Activated naive CD4-positive, alpha-beta T cell treated with anti-CD3 and anti-CD28 coated beads for 36 hours (primary cell): ENCODE measurements at regions of chr21 and their contacts with region 1.

Region 1: GRCh38 chr21:15729674-15730483 is at the start of gene USP25:
- DNase-seq: peak; percentile 77
- H3K4me3 Mint-ChIP-seq: peak within 1 kb of the TSS; percentile 91
- H3K27ac Mint-ChIP-seq: peak within 1 kb of the TSS; percentile 83
- H3K4me1 Mint-ChIP-seq: peaks cover 24% of the 10 kb centered on the region
- H3K27me3 Mint-ChIP-seq: peaks cover 2% of the 10 kb centered on the region
- total RNA-seq, gene USP25: 24.7 to 27.8 TPM

Region 2: GRCh38 chr21:14545906-14546480 is 1183.9 kb before region 1 on chr21 and contains the start of gene SAMSN1:
- CTCF ChIA-PET with region 1: no interaction called
- intact Hi-C with region 1: loop called (anchors 2 kb)
- DNase-seq: peak; percentile 83
- H3K4me3 Mint-ChIP-seq: peak within 1 kb of the TSS; percentile 88
- H3K27ac Mint-ChIP-seq: peak within 1 kb of the TSS; percentile 92
- H3K4me1 Mint-ChIP-seq: peaks cover 53% of the 10 kb centered on the region
- H3K27me3 Mint-ChIP-seq: no peaks in the 10 kb centered on the region
- total RNA-seq, gene SAMSN1: 41.1 to 43.0 TPM

Region 3: DNA sequence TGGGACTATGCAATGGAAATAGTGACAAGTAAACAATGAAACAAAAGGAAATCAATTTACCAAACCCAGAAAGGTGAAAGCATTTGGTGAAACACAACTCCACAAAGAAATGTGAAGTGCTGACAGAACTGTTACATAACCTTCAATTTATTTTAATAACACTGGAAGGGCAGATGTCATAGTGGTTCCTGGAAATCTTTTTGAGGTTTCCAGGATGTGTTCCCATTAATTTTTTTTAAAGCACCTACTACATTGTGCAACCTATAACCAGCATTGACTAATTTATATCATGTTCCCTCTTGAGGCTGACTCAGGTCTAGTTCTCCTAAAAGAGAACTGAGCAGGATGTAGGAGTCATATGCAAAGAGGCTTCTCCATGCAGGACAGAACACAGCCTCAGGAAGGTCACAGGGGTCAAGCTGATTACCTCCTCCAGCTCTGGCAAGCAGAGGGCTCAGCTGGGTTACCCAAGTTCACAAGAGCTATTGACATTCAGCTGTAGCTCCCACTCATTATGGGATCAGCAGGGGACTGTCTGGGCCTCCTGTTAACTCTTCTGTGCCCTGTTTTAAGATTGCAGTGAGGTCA is 508.0 kb before region 1 on chr21:
- CTCF ChIA-PET with region 1: no interaction called
- intact Hi-C with region 1: loop called (anchors 1 kb)
- DNase-seq: peak; percentile 48
- H3K4me3 Mint-ChIP-seq: no peak overlapping the region
- H3K27ac Mint-ChIP-seq: peak overlapping the region; percentile 30
- H3K4me1 Mint-ChIP-seq: peaks cover 29% of the 10 kb centered on the region
- H3K27me3 Mint-ChIP-seq: peaks cover 4% of the 10 kb centered on the region

Region 4: DNA sequence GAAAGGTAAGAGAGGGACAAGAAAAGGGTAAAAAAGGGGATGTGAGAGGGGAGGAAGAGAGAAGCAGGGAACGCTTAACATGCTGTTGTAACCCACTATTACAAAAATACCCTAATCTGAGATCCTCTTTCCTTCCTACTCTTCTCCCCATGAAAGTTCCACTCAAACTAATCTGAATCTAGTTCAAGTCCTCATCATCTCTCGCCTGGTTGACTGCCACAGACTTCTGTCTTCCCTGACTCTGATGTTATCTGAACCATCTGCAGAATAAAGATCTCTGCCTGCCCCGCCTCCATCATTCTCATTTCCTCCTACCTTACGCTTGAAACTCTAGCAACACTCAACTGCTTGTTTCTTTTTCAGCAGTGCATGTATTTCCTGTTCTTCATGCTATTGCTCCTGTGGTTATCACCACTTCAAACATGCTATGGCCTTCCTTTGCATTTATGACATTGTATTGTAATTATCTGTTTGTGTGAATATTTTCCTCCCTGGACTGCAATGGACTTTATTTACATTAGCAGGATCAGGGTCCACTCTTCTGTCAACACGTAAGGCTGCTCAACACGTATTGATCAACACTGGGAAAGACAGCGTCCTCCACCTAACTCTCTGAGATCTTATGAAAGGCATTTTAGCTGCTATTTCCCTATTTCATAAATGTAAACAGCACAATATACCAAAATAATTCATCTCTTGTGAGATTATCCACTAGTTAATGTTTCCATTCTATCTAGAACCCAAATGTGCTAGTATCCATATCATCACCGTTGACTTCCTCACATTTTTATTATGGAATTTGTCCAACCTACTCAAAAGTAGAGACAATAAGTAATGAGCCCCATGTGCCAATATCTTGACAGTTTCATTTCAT is 215.6 kb before region 1 on chr21:
- CTCF ChIA-PET with region 1: no interaction called
- intact Hi-C with region 1: loop called (anchors 1 kb)
- DNase-seq: peak; percentile 72
- H3K4me3 Mint-ChIP-seq: peak overlapping the region; percentile 55
- H3K27ac Mint-ChIP-seq: peak overlapping the region; percentile 85
- H3K4me1 Mint-ChIP-seq: peaks cover 28% of the 10 kb centered on the region
- H3K27me3 Mint-ChIP-seq: no peaks in the 10 kb centered on the region

Region 5: GRCh38 chr21:15793547-15794235 is 63.8 kb after region 1 on chr21:
- CTCF ChIA-PET with region 1: no interaction called
- intact Hi-C with region 1: loop called (anchors 2 kb)
- DNase-seq: no peak
- H3K4me3 Mint-ChIP-seq: no peak overlapping the region
- H3K27ac Mint-ChIP-seq: no peak overlapping the region
- H3K4me1 Mint-ChIP-seq: peaks cover 49% of the 10 kb centered on the region
- H3K27me3 Mint-ChIP-seq: no peaks in the 10 kb centered on the region

Region 6: DNA sequence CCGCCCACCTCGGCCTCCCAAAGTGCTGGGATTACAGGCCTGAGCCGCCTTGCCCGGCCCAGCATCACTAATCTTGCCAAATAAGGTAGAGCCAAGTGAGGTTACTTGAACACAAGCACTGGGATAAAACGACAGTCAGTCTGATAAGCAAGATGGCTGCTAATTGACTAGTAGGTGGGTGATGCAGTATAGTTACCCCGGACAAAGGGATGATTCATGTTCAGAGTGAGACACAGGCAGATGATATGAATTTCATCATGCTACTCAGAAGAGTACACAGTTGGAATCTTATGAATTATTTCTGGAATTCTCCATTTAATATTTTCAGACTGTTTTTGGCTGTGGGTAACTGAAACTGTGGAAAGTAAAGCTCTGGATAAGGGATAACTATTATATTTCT is 178.3 kb after region 1 on chr21:
- CTCF ChIA-PET with region 1: no interaction called
- intact Hi-C with region 1: no loop called
- DNase-seq: no peak
- H3K4me3 Mint-ChIP-seq: no peak overlapping the region
- H3K27ac Mint-ChIP-seq: no peak overlapping the region
- H3K4me1 Mint-ChIP-seq: no peaks in the 10 kb centered on the region
- H3K27me3 Mint-ChIP-seq: no peaks in the 10 kb centered on the region

Region 7: GRCh38 chr21:16330082-16330907 is 600.4 kb after region 1 on chr21:
- CTCF ChIA-PET with region 1: no interaction called
- intact Hi-C with region 1: no loop called
- DNase-seq: no peak
- H3K4me3 Mint-ChIP-seq: no peak overlapping the region
- H3K27ac Mint-ChIP-seq: no peak overlapping the region
- H3K4me1 Mint-ChIP-seq: no peaks in the 10 kb centered on the region
- H3K27me3 Mint-ChIP-seq: no peaks in the 10 kb centered on the region

Region 8: DNA sequence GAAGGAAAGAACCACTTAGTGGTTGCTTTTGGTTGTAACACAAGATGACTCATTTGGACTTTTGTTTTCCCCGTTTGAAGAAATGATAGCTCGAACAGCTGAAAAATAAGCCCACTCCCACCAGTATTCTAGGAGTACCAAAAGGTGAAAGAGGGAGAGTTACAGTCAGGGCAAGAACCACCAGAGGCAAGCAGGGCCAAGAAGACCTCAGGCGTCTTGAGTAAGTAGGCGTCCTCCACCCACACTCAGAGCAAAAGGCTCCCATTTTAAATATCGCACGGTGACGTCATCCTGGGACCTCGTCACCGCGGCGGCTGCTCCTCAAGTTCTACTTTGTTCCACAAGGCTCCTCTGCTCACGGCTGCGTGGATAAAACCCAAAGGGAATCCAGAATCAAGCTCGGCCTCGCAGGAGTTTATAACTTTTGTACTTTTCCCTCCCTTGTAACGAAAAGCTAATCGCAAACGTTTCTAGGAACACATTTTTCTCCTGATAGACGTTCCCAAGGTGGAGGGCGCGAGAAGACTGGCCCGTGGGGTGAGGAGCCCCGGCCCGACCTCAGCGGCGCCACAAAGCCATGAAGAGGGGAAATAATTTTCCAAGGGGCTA is 1881.6 kb after region 1 on chr21:
- CTCF ChIA-PET with region 1: no interaction called
- intact Hi-C with region 1: loop called (anchors 2 kb)
- DNase-seq: peak; percentile 88
- H3K4me3 Mint-ChIP-seq: peak overlapping the region; percentile 83
- H3K27ac Mint-ChIP-seq: peak overlapping the region; percentile 91
- H3K4me1 Mint-ChIP-seq: peaks cover 31% of the 10 kb centered on the region
- H3K27me3 Mint-ChIP-seq: no peaks in the 10 kb centered on the region